Natural killer cell (primary cell): ENCODE measurements at regions of chr14 and their contacts with region 1.

Region 1: DNA sequence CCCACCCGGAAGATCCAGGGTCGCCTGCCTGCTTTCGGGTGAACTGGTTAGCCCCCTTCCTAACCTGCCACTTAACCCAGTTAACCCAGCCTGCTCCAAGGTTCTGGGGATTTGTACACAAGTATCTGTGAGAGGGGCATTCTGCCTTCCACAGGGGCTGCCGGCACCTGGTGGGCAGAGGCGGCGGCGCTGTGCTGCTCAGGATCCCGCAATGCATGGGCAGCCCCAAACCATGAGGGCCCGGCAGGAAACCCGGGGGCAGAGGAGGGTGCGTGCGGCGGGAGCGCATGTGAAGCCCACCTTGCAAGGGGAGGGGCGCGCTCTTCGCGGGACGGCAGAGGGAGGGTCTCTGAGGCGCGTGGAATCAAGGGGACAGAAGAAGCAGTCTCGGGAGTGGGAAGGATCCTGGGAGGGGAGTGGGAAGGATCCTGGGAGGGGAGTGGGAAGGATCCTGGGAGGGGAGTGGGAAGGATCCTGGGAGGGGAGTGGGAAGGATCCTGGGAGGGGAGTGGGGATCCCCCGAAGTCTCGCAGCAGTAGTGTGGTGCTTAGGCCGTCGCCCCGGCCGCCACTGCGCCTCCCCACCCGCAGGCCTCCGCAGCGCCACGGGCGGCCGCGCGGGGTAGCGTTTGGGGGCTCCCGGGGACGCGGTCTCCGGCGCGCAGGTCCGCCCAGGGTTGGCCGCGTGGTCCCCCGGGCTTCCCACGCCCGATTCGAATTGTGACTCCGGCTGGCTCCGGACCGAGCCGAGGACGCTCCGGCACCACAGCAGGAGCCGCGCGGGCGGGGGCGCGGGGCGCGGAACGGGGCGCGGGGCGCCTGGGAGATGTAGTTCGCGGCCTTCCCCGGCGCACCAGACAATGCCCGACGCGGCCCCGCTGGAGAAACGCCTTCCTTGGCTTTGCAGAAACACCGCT is 4.9 kb upstream of the MTA1 start:
- DNase-seq: peak; percentile 63 to 78
- ATAC-seq: peak; percentile 83 to 85 (median 85)
- H3K4me3 ChIP-seq: peak overlapping the region; percentile 16
- H3K4me3 Mint-ChIP-seq: peak overlapping the region; percentile 70
- H3K27ac ChIP-seq: no peak overlapping the region
- H3K27ac Mint-ChIP-seq: peak overlapping the region in 1 of 2 donors; percentile 24
- H3K4me1 ChIP-seq: peaks cover 39% of the 10 kb centered on the region
- H3K4me1 Mint-ChIP-seq: peaks cover 0 to 14% of the 10 kb centered on the region in 2 donors
- H3K27me3 ChIP-seq: peaks cover 24% of the 10 kb centered on the region
- H3K27me3 Mint-ChIP-seq: peaks cover 0 to 20% of the 10 kb centered on the region in 2 donors
- CTCF ChIP-seq: peak; percentile 91

Region 2: DNA sequence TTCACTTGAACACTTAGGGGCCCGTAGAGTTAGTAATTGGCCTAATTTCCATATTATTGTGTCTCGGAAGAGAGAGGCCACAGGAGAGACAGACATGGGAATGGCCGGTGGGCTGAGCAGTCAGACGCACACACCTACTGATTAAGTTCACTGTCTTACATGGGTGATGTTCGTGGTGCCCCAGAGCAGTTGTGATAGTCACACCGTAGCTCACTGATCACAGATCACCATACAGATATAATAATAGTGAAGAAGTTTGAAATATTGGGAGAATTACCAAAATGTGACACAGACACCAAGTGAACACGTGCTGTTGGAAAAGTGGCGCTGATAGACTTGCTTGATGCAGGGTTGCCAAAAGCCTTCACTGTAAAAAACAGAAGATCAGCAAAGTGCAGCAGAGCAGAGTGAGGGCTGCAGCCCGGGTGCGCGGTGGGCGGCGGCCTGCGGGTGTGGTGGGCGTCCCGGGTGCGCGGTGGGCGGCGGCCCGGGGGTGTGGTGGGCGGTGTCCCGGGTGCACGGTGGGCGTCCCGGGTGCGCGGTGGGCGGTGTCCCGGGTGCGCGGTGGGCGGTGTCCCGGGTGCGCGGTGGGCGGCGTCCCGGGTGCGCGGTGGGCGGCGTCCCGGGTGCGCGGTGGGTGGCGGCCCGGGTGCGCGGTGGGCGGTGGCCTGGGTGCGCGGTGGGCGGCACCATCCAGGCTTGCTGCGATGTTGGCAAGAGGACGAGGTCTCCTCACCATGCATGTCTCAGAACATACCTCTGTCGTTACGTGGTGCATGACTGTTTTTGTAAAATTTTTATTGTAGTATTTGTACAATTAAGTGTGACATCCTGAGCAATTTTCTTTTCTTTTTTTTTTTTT is 50.6 kb before region 1 on chr14:
- intact Hi-C with region 1: no loop called
- DNase-seq: peak in 1 of 2 donors; percentile 68
- ATAC-seq: peak in 2 of 3 donors; percentile 66 to 83
- H3K4me3 ChIP-seq: no peak overlapping the region
- H3K4me3 Mint-ChIP-seq: peak overlapping the region; percentile 77
- H3K27ac ChIP-seq: no peak overlapping the region
- H3K27ac Mint-ChIP-seq: peak overlapping the region in 1 of 2 donors; percentile 53
- H3K4me1 ChIP-seq: peaks cover 10% of the 10 kb centered on the region
- H3K4me1 Mint-ChIP-seq: peaks cover 6 to 10% of the 10 kb centered on the region in 2 donors
- H3K27me3 ChIP-seq: no peaks in the 10 kb centered on the region
- H3K27me3 Mint-ChIP-seq: no peaks in the 10 kb centered on the region
- CTCF ChIP-seq: no peak

Region 3: GRCh38 chr14:105375635-105376057 is 39.1 kb before region 1 on chr14:
- intact Hi-C with region 1: loop called (anchors 5 kb)
- DNase-seq: peak in 1 of 2 donors; percentile 29
- ATAC-seq: peak; percentile 81 to 84 (median 81)
- H3K4me3 ChIP-seq: no peak overlapping the region
- H3K4me3 Mint-ChIP-seq: peak overlapping the region; percentile 84
- H3K27ac ChIP-seq: peak overlapping the region; percentile 51
- H3K27ac Mint-ChIP-seq: peak overlapping the region; percentile 85 to 90
- H3K4me1 ChIP-seq: peaks cover 51% of the 10 kb centered on the region
- H3K4me1 Mint-ChIP-seq: peaks cover 16 to 17% of the 10 kb centered on the region in 2 donors
- H3K27me3 ChIP-seq: no peaks in the 10 kb centered on the region
- H3K27me3 Mint-ChIP-seq: no peaks in the 10 kb centered on the region
- CTCF ChIP-seq: no peak

Region 4: DNA sequence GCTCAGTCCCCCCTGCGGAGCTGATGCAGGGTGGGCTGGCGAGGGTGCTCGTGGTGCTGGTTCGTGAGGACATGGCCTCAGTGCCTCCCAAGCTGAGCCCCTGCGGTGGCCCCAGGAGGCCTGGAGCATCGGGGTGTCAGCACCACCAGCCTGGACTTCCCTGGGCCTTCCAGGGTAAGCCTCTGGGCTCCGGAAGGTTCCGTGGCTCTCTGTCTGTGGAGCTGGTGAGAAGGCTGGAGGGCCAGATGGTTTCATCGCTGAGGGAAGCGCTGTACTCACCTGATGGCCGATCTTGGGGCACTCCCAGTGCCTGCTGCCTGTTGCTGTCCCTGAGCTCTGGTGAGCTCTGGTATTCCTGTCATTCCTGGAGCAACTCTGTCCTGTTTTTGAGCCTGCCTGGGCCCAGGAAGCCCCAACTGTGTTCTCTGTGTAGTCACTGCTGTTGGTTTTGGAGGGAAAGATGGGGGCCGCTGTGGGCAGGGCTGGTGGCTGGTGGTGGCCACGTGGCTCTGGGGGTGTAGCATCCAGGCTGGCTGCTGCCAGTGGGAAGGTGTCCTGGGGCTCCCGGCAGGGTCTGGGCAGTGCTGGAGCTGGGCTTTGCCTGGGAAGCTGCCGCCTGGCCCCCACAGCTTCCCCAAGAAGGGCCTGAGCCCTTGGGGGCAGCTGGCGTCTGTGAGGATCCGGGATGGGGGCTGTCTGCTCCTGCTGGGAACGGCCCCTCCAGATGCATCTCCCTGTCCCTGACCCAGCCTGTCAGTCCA is 23.2 kb after region 1 on chr14:
- intact Hi-C with region 1: loop called (anchors 1 kb)
- DNase-seq: no peak
- ATAC-seq: no peak
- H3K4me3 ChIP-seq: no peak overlapping the region
- H3K4me3 Mint-ChIP-seq: no peak overlapping the region
- H3K27ac ChIP-seq: no peak overlapping the region
- H3K27ac Mint-ChIP-seq: no peak overlapping the region
- H3K4me1 ChIP-seq: no peaks in the 10 kb centered on the region
- H3K4me1 Mint-ChIP-seq: peaks cover 18 to 23% of the 10 kb centered on the region in 2 donors
- H3K27me3 ChIP-seq: no peaks in the 10 kb centered on the region
- H3K27me3 Mint-ChIP-seq: no peaks in the 10 kb centered on the region
- CTCF ChIP-seq: no peak